Activated T-helper 1 cell treated with anti-CD3 and anti-CD28 coated beads, Interleukin-12 subunit alpha, Interleukin-12 subunit beta, Interleukin-2, Interleukin-4 antibody, amounts not matched to agents 30 ng/mL and 10 ng/mL and 1 ng/mL, durations not matched to agents 14 hours and 24 hours and 36 hours (primary cell): ENCODE measurements at regions of chr2 and their contacts with region 1.

Region 1: GRCh38 chr2:61144697-61145268 is 17.2 kb upstream of the C2orf74 start:
- DNase-seq: peak; percentile 92
- H3K4me3 Mint-ChIP-seq: peak overlapping the region; percentile 94
- H3K27ac Mint-ChIP-seq: peak overlapping the region; percentile 94
- H3K4me1 Mint-ChIP-seq: peaks cover 5% of the 10 kb centered on the region
- H3K27me3 Mint-ChIP-seq: no peaks in the 10 kb centered on the region

Region 2: GRCh38 chr2:61065715-61066709 is 78.8 kb before region 1 on chr2 and contains the start of gene SANBR:
- intact Hi-C with region 1: loop called (anchors 1 kb)
- DNase-seq: peak; percentile 85
- H3K4me3 Mint-ChIP-seq: peak within 1 kb of the TSS; percentile 92
- H3K27ac Mint-ChIP-seq: peak within 1 kb of the TSS; percentile 87
- H3K4me1 Mint-ChIP-seq: peaks cover 16% of the 10 kb centered on the region
- H3K27me3 Mint-ChIP-seq: peaks cover 5% of the 10 kb centered on the region
- total RNA-seq, gene SANBR: 2.0 and 2.2 TPM in 2 replicates

Region 3: GRCh38 chr2:61085883-61086282 is 58.9 kb before region 1 on chr2:
- intact Hi-C with region 1: no loop called
- DNase-seq: no peak
- H3K4me3 Mint-ChIP-seq: no peak overlapping the region
- H3K27ac Mint-ChIP-seq: no peak overlapping the region
- H3K4me1 Mint-ChIP-seq: no peaks in the 10 kb centered on the region
- H3K27me3 Mint-ChIP-seq: no peaks in the 10 kb centered on the region

Region 4: GRCh38 chr2:61694312-61695274 is 549.8 kb after region 1 on chr2:
- intact Hi-C with region 1: loop called (anchors 10 kb)
- DNase-seq: peak; percentile 80
- H3K4me3 Mint-ChIP-seq: peak overlapping the region; percentile 89
- H3K27ac Mint-ChIP-seq: peak overlapping the region; percentile 76
- H3K4me1 Mint-ChIP-seq: peaks cover 14% of the 10 kb centered on the region
- H3K27me3 Mint-ChIP-seq: peaks cover 2% of the 10 kb centered on the region